ENCODE measurements at regions of chr6 and their contacts with region 1.

Region 1: DNA sequence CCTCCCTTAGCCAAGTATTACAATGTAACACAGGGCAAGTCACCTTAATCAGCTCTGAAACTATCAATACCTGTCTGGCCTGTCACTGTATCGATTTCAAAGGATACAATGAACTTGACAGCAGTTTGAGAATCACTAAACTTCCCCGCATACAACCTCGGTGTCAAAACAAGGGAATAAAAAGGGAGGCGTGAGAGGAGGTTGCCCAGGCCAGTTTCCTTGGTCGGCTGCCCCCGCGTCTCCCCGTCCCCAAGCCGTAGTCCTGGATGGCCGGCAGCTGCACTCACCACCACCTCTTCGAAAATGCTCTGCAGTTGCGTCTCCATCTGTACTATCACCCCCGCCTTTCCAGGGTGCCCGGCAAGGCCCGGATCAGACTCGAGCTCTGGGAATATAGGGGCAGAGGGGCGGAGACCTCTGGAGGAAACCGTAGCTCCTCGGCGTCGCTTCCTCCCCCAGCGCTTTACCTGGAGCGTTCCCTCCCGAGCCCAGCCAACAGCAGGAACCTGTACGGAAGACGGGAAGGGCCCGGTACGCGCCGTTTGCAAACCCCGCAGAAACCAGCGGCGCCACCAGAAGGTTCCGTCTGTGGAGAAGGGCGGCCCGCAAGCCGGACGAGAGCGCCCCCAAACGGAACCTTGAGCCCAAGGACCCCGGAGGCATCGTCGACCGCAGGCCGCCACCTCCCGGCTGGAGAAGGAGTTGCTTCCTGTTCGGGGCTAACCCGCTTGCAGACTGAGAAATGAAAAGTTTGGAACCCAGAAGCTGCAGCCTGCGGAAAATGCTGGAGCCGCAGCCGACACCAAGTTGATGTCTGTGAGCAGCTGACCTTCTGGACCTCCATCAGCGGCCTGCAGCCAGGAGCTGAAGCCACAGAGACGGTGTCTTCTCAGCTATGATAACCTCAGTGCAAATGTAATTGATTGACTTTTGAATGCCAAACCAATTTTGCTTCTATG is at the start of gene MED23:
- DNase-seq: peak; percentile 96
- H3K4me3 Mint-ChIP-seq: peak within 1 kb of the TSS; percentile 99
- H3K27ac Mint-ChIP-seq: peak within 1 kb of the TSS; percentile 92
- H3K4me1 Mint-ChIP-seq: peaks cover 29% of the 10 kb centered on the region
- H3K27me3 Mint-ChIP-seq: no peaks in the 10 kb centered on the region
- total RNA-seq, gene MED23: 27.4 to 28.8 TPM

Region 2: DNA sequence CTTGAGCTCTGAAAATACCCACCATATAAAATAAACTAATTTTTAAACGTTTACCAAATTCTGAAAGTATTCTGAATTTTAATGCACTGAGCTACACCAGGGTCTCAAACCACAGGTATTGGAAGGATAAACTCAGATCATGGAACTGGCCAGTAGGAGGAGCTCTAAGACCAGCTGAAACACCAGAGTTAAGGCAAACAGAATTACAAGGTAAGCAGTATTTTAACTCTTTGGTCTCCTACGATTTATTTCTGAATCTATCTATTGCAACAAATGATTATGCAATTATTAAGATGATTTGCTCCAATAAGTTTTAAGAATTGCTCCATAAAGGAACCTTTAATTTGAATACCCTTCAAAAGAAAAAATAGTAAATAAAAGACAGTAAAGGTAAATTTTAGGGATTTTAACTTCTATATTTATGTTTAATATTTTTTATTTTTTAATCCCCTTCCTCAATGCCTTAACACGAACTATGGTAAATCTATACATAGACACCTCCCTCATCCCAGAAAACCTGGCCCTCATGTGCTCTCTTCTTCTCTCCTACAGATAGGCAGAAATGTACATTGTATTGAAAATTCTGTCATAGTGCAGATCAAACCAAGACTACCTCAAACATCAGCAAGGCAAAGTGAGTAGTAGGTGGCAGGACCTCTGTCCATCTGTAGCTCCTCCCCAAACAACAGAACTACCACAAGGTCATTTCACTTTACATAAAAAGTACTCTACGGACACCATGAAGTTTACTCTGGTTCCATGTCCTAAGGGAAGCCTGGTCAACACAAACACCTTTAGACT is 742.4 kb before region 1 on chr6:
- CTCF ChIA-PET with region 1: interaction called, 5 read pairs
- intact Hi-C with region 1: loop called (anchors 1 kb)
- DNase-seq: peak; percentile 86
- H3K4me3 Mint-ChIP-seq: no peak overlapping the region
- H3K27ac Mint-ChIP-seq: no peak overlapping the region
- H3K4me1 Mint-ChIP-seq: no peaks in the 10 kb centered on the region
- H3K27me3 Mint-ChIP-seq: no peaks in the 10 kb centered on the region

Region 3: DNA sequence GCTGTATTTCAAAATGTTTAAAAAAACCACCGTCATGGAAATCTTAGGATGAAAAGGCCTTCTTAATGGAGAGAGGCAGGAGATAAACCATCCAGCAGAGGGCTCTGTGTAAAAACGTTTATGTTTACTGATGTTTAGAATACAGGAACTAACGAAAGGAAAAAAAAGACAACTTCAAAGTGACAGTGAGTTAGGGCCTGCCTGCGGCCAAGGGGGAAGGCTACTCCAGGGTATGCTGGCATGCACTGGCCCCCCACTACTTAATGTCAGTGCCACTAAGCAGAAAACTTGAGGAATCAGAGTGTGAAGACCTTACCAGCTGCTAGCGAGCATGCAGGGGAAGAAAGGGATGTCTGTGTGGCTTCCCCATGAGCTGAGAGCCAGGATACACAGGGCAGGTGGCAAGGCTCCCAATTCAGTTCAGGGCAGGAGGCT is 445.0 kb before region 1 on chr6:
- CTCF ChIA-PET with region 1: interaction called, 6 read pairs
- intact Hi-C with region 1: loop called (anchors 1 kb)
- DNase-seq: peak; percentile 35
- H3K4me3 Mint-ChIP-seq: peak overlapping the region; percentile 5
- H3K27ac Mint-ChIP-seq: no peak overlapping the region
- H3K4me1 Mint-ChIP-seq: peaks cover 8% of the 10 kb centered on the region
- H3K27me3 Mint-ChIP-seq: no peaks in the 10 kb centered on the region

Region 4: GRCh38 chr6:131451321-131452144 is 176.5 kb before region 1 on chr6:
- CTCF ChIA-PET with region 1: no interaction called
- intact Hi-C with region 1: loop called (anchors 1 kb)
- DNase-seq: peak; percentile 31
- H3K4me3 Mint-ChIP-seq: no peak overlapping the region
- H3K27ac Mint-ChIP-seq: peak overlapping the region; percentile 83
- H3K4me1 Mint-ChIP-seq: peaks cover 40% of the 10 kb centered on the region
- H3K27me3 Mint-ChIP-seq: no peaks in the 10 kb centered on the region

Region 5: DNA sequence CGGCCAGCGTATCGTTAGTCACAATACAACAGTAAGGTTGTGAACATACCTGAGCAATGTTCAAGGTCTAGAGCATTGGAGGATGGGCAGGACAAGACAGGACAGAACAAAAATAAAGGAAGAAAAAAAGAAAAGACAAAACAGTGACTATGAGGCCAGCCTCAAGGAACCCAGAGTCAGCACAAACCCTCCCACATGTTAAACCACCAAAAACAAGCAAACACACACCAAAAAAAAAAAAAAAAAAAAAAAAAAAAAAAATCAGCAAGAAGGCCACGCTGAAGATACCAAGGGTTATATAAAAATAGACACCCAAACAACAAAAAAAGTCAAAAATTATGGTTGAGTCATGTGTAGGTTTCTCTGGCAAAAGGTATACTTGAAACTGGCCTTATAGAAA is 12.7 kb before region 1 on chr6:
- CTCF ChIA-PET with region 1: interaction called, 34 read pairs
- intact Hi-C with region 1: no loop called
- DNase-seq: no peak
- H3K4me3 Mint-ChIP-seq: no peak overlapping the region
- H3K27ac Mint-ChIP-seq: no peak overlapping the region
- H3K4me1 Mint-ChIP-seq: peaks cover 3% of the 10 kb centered on the region
- H3K27me3 Mint-ChIP-seq: no peaks in the 10 kb centered on the region

Region 6: GRCh38 chr6:132813173-132813856 is 1185.3 kb after region 1 on chr6:
- CTCF ChIA-PET with region 1: no interaction called
- intact Hi-C with region 1: loop called (anchors 2 kb)
- DNase-seq: peak; percentile 51
- H3K4me3 Mint-ChIP-seq: peak overlapping the region; percentile 94
- H3K27ac Mint-ChIP-seq: peak overlapping the region; percentile 97
- H3K4me1 Mint-ChIP-seq: peaks cover 27% of the 10 kb centered on the region
- H3K27me3 Mint-ChIP-seq: no peaks in the 10 kb centered on the region

Measured in activated naive CD4-positive, alpha-beta T cell treated with anti-CD3 and anti-CD28 coated beads for 36 hours (primary cell).